Lower leg skin (tissue), 4 donors: ENCODE measurements at regions of chr11 and their contacts with region 1.

Region 1: DNA sequence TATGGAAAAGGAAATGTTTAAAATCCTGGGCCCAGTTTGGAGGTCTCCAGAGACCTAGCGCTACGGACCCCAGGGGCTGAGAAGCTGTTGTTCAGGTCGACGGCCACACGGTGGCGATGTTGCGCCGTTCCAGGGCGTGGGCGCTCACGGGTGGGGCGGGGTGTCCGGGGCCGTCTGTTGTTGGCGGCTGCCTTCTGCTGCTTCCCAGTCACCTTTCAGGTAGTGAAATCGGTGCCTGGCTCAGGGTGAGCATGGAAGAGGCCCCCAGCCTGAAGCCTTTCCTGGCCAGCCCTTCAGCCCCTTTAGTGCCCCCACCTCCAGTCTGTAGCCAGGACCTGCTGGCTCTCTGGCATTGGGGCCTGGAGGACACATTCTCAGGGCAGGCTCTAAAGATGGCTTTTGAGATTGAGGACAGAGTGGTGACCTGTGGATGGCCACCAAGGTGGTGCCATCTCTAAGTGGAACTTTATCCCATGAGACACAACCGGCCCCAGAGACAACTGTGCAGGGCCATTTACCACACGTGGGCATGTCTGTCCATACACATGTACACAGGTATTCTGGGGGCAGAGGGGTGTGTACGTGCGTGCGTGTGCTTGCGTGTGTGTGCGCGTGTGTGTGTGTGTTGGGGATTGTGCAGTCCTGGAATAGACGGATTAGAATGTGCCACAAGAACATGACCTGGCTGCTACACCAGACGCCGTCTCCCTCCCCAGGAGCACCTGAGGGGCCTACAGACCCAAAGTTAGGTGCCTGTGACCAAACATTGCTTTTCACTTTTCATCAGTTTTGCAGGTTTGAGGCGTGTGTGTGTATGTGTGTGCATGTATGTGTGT is 53.8 kb downstream of the ST14 start:
- DNase-seq: peak; percentile 29 to 92
- H3K4me3 ChIP-seq: no peak overlapping the region
- CTCF ChIP-seq: peak in 1 of 3 donors; percentile 68
- POLR2A ChIP-seq: no peak

Region 2: GRCh38 chr11:129853518-129854236 is 359.7 kb before region 1 on chr11:
- intact Hi-C with region 1: no loop called
- DNase-seq: peak; percentile 77 to 91
- H3K4me3 ChIP-seq: no peak overlapping the region
- CTCF ChIP-seq: no peak
- POLR2A ChIP-seq: no peak

Region 3: DNA sequence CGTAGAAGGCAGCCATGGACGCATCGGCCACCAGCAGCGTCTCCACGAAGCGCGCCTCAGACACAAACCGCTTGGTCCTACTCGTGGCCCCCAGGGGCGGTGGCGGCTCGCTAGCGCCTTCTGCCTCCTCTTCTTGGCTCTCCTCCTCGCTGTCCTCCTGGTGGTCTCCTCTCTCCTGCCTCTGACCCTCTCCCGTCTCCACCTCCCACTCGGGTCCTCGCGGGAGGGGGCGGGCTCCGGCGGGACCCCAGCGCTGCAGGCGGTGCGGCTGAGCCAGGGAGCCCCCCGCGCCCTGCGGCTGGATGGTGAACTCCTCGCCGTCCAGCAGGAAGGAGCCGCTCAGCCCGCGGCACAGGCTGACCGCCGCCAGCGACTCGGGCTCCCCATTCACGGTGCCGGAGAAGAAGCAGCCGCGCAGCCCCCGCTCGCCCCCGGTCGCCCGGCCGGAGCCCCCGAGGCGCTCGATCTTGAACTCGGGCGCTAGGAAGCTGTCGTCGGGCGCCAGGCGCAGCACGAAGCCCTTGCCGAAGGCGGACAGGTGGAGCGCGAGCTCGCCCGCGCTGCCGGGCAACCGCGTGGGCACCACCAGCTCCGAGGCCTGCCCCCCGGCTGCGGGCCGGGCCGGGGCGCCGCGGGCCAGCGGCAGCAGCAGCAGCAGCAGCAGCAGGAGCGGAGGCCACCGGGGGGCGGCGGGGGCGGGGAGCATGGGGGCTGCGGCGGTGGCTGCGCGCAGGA is 214.4 kb after region 1 on chr11:
- intact Hi-C with region 1: loop called (anchors 5 kb)
- DNase-seq: no peak
- H3K4me3 ChIP-seq: no peak overlapping the region
- CTCF ChIP-seq: no peak
- POLR2A ChIP-seq: no peak

Region 4: DNA sequence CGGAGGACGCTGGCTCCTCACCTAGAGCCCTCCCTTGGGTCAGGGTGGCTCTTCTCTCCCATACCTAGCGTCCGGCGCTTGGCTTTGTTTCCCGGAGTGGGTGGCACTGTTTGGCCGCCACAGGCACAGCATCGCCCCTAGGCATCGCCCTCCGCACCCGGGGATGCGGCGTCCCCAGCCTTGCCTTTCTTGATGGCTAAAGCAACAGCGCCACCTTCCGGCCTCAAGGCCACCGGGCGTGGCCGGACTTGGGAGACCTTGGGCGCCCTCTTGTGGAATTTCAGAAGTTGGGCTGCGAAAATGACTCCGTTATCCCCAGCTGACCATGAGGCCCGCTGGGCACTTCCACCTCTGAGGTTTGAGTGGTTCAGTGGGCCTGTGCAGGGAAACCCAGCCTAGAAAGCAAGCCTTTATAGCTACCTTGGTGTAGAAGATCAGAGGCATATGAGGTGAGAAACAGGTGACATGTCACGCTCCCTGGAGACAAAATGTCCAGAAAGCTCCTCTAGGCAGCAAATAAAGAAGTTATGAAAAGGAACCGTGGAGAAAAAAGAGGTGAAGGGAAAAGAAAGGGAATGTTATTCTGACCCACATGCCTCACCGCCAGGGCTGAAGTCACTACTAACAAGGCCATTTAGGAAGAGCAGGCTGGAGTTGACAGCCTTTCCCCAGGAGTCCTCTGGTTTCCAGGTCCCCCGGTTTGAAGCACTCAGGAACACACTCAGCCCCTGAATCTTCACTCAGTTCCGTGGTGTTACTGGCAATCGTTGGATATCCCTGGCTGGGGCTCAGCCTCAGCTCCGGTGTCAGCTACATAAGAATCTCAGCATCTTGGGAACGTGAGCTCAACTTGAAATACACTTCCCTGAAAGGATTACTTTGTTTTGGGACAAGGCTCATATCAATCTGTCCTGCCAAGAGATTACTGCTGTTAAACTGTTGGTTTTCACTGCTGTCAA is 648.8 kb after region 1 on chr11:
- intact Hi-C with region 1: loop called (anchors 10 kb)
- DNase-seq: peak; percentile 84 to 98
- H3K4me3 ChIP-seq: no peak overlapping the region
- CTCF ChIP-seq: peak in 1 of 3 donors; percentile 97
- POLR2A ChIP-seq: no peak